H1 (cell line): ENCODE measurements at regions of chr11 and their contacts with region 1.

Region 1: GRCh38 chr11:130403271-130403804 is 25.1 kb downstream of the ADAMTS8 start:
- DNase-seq: no peak
- H3K4me3 ChIP-seq: peak overlapping the region in 1 of 4 experiments; percentile 22; a peak in 1 of 8 replicates
- H3K27ac ChIP-seq: peak overlapping the region; percentile 87
- H3K4me1 ChIP-seq: peaks cover 9 to 24% (median 13%) of the 10 kb centered on the region in 4 experiments
- H3K27me3 ChIP-seq: no peaks in the 10 kb centered on the region; a peak in 1 of 7 replicates
- CTCF ChIP-seq: no peak
- EP300 ChIP-seq: no peak
- POLR2A ChIP-seq: no peak
- RAD21 ChIP-seq: no peak

Region 2: GRCh38 chr11:130390071-130390758 is 13.1 kb before region 1 on chr11:
- CTCF ChIA-PET with region 1: interaction called, 9 read pairs
- POLR2A ChIA-PET with region 1: interaction called, 18 read pairs
- DNase-seq: no peak
- H3K4me3 ChIP-seq: no peak overlapping the region
- H3K27ac ChIP-seq: no peak overlapping the region
- H3K4me1 ChIP-seq: peaks cover 0 to 6% (median 1%) of the 10 kb centered on the region in 4 experiments; a peak in 3 of 7 replicates
- H3K27me3 ChIP-seq: no peaks in the 10 kb centered on the region; a peak in 1 of 7 replicates
- CTCF ChIP-seq: peak; percentile 1 to 61 (median 55)
- EP300 ChIP-seq: no peak
- POLR2A ChIP-seq: no peak
- RAD21 ChIP-seq: peak; percentile 63 to 71

Region 3: GRCh38 chr11:130420478-130421198 is 17.3 kb after region 1 on chr11:
- CTCF ChIA-PET with region 1: interaction called, 9 read pairs
- POLR2A ChIA-PET with region 1: interaction called, 26 read pairs
- DNase-seq: no peak
- H3K4me3 ChIP-seq: no peak overlapping the region
- H3K27ac ChIP-seq: no peak overlapping the region
- H3K4me1 ChIP-seq: no peaks in the 10 kb centered on the region; a peak in 1 of 7 replicates
- H3K27me3 ChIP-seq: no peaks in the 10 kb centered on the region; a peak in 1 of 7 replicates
- CTCF ChIP-seq: no peak
- EP300 ChIP-seq: no peak
- POLR2A ChIP-seq: no peak
- RAD21 ChIP-seq: no peak